HCT116 (cell line): ENCODE measurements at regions of chr12 and their contacts with region 1.

Region 1: DNA sequence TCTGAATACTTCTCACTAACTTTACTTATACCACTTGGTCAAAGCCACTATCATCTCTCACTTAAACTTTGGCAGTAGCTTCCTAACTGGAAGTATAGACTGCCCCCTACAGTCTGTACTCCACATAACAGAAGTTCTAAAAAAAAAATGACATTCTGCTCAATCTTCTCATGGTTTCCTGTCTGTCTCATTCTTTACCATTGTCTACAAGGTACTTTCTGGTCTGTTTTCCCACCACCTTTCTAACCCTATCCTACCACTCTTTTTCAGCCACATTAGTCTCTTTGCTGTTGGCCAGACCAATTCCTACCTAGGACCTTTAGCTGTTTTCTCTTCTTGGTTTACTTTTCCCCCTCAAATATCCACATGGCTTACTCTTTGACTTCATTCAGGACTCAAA is 14.7 kb downstream of the CPSF6 start:
- DNase-seq: peak; percentile 33
- ATAC-seq: peak; percentile 46; the same call in 1 of the 2 replicates
- H3K4me3 ChIP-seq: no peak overlapping the region
- H3K27ac ChIP-seq: no peak overlapping the region
- H3K4me1 ChIP-seq: no peaks in the 10 kb centered on the region
- H3K27me3 ChIP-seq: no peaks in the 10 kb centered on the region
- CTCF ChIP-seq: peak; percentile 47 to 71 (median 71); a peak in 5 of 6 replicates
- POLR2A ChIP-seq: no peak
- RAD21 ChIP-seq: peak; percentile 61

Region 2: GRCh38 chr12:68865399-68866164 is 388.5 kb before region 1 on chr12:
- CTCF ChIA-PET with region 1: no interaction called
- POLR2A ChIA-PET with region 1: no interaction called
- RAD21 ChIA-PET with region 1: no interaction called
- intact Hi-C with region 1: loop called (anchors 2 kb)
- DNase-seq: no peak
- ATAC-seq: no peak
- H3K4me3 ChIP-seq: no peak overlapping the region
- H3K27ac ChIP-seq: no peak overlapping the region
- H3K4me1 ChIP-seq: no peaks in the 10 kb centered on the region
- H3K27me3 ChIP-seq: no peaks in the 10 kb centered on the region
- CTCF ChIP-seq: no peak
- POLR2A ChIP-seq: no peak
- RAD21 ChIP-seq: no peak

Region 3: GRCh38 chr12:69266036-69266635 is 12.1 kb after region 1 on chr12:
- CTCF ChIA-PET with region 1: interaction called, 22 read pairs
- POLR2A ChIA-PET with region 1: interaction called, 3 read pairs
- RAD21 ChIA-PET with region 1: no interaction called
- intact Hi-C with region 1: no loop called
- DNase-seq: no peak
- ATAC-seq: no peak
- H3K4me3 ChIP-seq: no peak overlapping the region
- H3K27ac ChIP-seq: no peak overlapping the region
- H3K4me1 ChIP-seq: no peaks in the 10 kb centered on the region
- H3K27me3 ChIP-seq: no peaks in the 10 kb centered on the region
- CTCF ChIP-seq: no peak
- POLR2A ChIP-seq: no peak
- RAD21 ChIP-seq: no peak